Activated CD4-positive, alpha-beta memory T cell treated with anti-CD3 and anti-CD28 coated beads, Interleukin-2, amount 10 ng/mL, durations not matched to agents 7 days and 5 days (primary cell): ENCODE measurements at regions of chr12 and their contacts with region 1.

Region 1: DNA sequence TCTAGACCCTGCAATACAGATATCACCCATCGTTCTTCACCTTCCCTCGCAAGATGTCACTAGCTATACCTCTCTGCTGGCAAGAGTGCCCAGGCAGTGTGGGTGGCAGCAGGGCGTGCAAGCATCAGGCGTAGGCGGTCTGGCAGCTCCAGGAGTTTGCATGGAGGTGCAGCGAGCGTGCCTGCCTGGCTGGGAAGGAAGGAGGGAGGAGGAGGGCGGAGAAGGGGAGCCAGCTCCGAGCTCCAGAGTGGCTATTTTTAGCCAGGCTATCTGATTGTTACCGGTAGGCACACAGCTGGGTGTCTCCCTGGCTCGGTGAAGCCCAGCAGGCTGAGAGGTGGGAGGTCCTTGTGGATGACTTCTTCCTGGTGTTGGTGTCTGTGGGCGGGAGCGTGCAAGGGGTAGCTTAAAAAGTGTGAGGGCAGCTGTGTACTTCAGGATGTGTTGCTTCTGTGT is 6.2 kb downstream of the FOXJ2 start:
- DNase-seq: peak; percentile 37
- H3K4me3 Mint-ChIP-seq: peak overlapping the region; percentile 25
- H3K27ac Mint-ChIP-seq: no peak overlapping the region
- H3K4me1 Mint-ChIP-seq: peaks cover 55% of the 10 kb centered on the region
- H3K27me3 Mint-ChIP-seq: no peaks in the 10 kb centered on the region

Region 2: GRCh38 chr12:8026291-8026900 is 12.3 kb before region 1 on chr12:
- CTCF ChIA-PET with region 1: interaction called, 5 read pairs
- POLR2A ChIA-PET with region 1: interaction called, 20 read pairs
- DNase-seq: peak; percentile 98
- H3K4me3 Mint-ChIP-seq: peak overlapping the region; percentile 88
- H3K27ac Mint-ChIP-seq: peak overlapping the region; percentile 99
- H3K4me1 Mint-ChIP-seq: peaks cover 17% of the 10 kb centered on the region
- H3K27me3 Mint-ChIP-seq: no peaks in the 10 kb centered on the region